CD4-positive, alpha-beta T cell (primary cell): ENCODE measurements at regions of chr1 and their contacts with region 1.

Region 1: DNA sequence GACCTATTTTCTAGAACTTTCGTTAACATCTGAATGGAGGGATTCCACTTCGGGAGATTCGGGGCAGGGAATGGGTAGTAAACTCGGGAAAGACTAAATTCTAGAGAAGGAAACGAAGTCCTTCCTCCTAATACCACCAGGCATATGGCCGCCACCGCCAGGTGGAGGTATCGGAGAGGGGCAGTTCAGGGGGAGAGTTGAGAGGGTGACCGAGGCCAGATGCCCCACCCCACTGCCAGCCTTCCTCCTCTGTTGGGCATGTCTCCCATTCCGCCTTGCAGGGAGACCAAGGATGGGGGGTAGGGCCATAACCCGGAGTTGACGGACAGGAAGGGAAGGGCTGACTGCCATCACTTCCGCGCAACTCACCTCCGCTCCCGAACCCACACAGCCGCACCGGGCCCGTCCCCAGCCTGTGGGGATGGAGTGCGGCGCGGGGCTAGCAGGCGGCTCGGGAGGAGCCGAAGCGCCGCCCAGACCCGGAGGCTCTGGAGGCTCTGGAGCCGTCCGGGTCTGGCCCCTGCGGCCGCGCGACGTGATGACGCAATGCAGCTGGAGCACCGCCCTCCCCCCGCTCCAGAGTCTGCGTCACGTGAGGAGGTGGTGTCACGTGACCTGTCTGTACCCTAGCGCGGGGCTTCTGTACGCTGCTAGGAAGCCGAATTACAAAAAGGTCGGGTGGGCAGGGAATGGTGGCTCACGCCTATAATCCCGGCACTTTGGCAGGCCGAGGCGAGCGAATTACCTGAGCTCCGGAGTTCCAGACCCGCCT is at the start of gene KLHL12:
- DNase-seq: peak; percentile 89 to 97 (median 92)
- ATAC-seq: peak; percentile 92
- H3K4me3 ChIP-seq: peak within 1 kb of the TSS; percentile 93
- H3K4me3 Mint-ChIP-seq: peak within 1 kb of the TSS; percentile 98
- H3K27ac ChIP-seq: peak within 1 kb of the TSS; percentile 88 to 89
- H3K27ac Mint-ChIP-seq: peak within 1 kb of the TSS; percentile 98
- H3K4me1 ChIP-seq: peaks cover 14% of the 10 kb centered on the region
- H3K4me1 Mint-ChIP-seq: peaks cover 41% of the 10 kb centered on the region
- H3K27me3 ChIP-seq: no peaks in the 10 kb centered on the region
- H3K27me3 Mint-ChIP-seq: no peaks in the 10 kb centered on the region
- CTCF ChIP-seq: peak; percentile 69
- total RNA-seq, gene KLHL12: 18.5 to 18.6 TPM

Region 2: GRCh38 chr1:202810615-202811295 is 116.2 kb before region 1 on chr1 and contains the start of gene PCAT6:
- CTCF ChIA-PET with region 1: no interaction called
- POLR2A ChIA-PET with region 1: interaction called, 4 read pairs
- intact Hi-C with region 1: loop called in 1 of 2 experiments (anchors 10 kb)
- DNase-seq: peak; percentile 67 to 93 (median 81)
- ATAC-seq: peak; percentile 67
- H3K4me3 ChIP-seq: peak within 1 kb of the TSS; percentile 96
- H3K4me3 Mint-ChIP-seq: peak within 1 kb of the TSS; percentile 90
- H3K27ac ChIP-seq: peak within 1 kb of the TSS in 1 of 2 donors; percentile 35
- H3K27ac Mint-ChIP-seq: peak within 1 kb of the TSS; percentile 80
- H3K4me1 ChIP-seq: peaks cover 33% of the 10 kb centered on the region
- H3K4me1 Mint-ChIP-seq: peaks cover 38% of the 10 kb centered on the region
- H3K27me3 ChIP-seq: no peaks in the 10 kb centered on the region
- H3K27me3 Mint-ChIP-seq: no peaks in the 10 kb centered on the region
- CTCF ChIP-seq: no peak
- total RNA-seq, gene PCAT6: 0.91 to 1.3 TPM

Region 3: GRCh38 chr1:202957733-202958543 is 31.0 kb after region 1 on chr1 and contains the start of gene ADIPOR1:
- CTCF ChIA-PET with region 1: no interaction called
- POLR2A ChIA-PET with region 1: interaction called, 5 read pairs
- intact Hi-C with region 1: loop called (anchors 1 to 2 kb)
- DNase-seq: peak; percentile 88 to 97 (median 95)
- ATAC-seq: peak; percentile 96
- H3K4me3 ChIP-seq: peak within 1 kb of the TSS; percentile 98
- H3K4me3 Mint-ChIP-seq: peak within 1 kb of the TSS; percentile 98
- H3K27ac ChIP-seq: peak within 1 kb of the TSS; percentile 81
- H3K27ac Mint-ChIP-seq: peak within 1 kb of the TSS; percentile 95
- H3K4me1 ChIP-seq: peaks cover 38% of the 10 kb centered on the region
- H3K4me1 Mint-ChIP-seq: peaks cover 55% of the 10 kb centered on the region
- H3K27me3 ChIP-seq: no peaks in the 10 kb centered on the region
- H3K27me3 Mint-ChIP-seq: no peaks in the 10 kb centered on the region
- CTCF ChIP-seq: peak; percentile 22
- total RNA-seq, gene ADIPOR1: 91.5 to 95.6 TPM

Region 4: DNA sequence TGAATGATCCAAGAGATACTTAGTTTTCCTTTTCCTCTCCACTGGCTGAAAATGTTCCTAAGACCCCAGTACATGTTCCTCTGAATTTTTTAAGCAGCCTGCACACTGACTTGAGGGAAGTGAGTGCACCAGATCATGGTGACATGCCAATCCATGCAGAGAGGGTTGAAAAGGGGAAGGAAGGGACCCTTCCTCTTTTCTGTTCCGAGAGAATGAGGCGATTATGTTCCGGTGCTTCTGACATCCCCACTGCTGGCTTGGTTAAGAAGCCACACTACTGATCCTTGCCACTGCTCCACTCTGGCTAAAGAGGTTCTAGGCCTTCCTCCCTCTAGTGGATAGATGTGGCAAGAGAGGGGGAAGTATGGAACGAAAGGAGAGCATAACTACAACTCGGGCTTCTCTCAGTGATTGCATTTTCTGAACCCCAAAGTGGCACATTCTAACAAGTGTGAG is 42.0 kb after region 1 on chr1:
- CTCF ChIA-PET with region 1: interaction called, 5 read pairs
- POLR2A ChIA-PET with region 1: interaction called, 9 read pairs
- intact Hi-C with region 1: loop called (anchors 2 kb)
- DNase-seq: peak in 8 of 14 experiments; percentile 5 to 78 (median 24)
- ATAC-seq: peak; percentile 45
- H3K4me3 ChIP-seq: no peak overlapping the region
- H3K4me3 Mint-ChIP-seq: peak overlapping the region; percentile 94
- H3K27ac ChIP-seq: no peak overlapping the region
- H3K27ac Mint-ChIP-seq: peak overlapping the region; percentile 90
- H3K4me1 ChIP-seq: peaks cover 36% of the 10 kb centered on the region
- H3K4me1 Mint-ChIP-seq: peaks cover 27% of the 10 kb centered on the region
- H3K27me3 ChIP-seq: no peaks in the 10 kb centered on the region
- H3K27me3 Mint-ChIP-seq: no peaks in the 10 kb centered on the region
- CTCF ChIP-seq: peak; percentile 47

Region 5: GRCh38 chr1:202998836-202999750 is 72.2 kb after region 1 on chr1:
- CTCF ChIA-PET with region 1: interaction called, 5 read pairs
- POLR2A ChIA-PET with region 1: interaction called, 3 read pairs
- intact Hi-C with region 1: loop called (anchors 1 kb)
- DNase-seq: peak; percentile 29 to 83 (median 58)
- ATAC-seq: peak; percentile 59
- H3K4me3 ChIP-seq: no peak overlapping the region
- H3K4me3 Mint-ChIP-seq: no peak overlapping the region
- H3K27ac ChIP-seq: no peak overlapping the region
- H3K27ac Mint-ChIP-seq: no peak overlapping the region
- H3K4me1 ChIP-seq: peaks cover 4% of the 10 kb centered on the region
- H3K4me1 Mint-ChIP-seq: peaks cover 7% of the 10 kb centered on the region
- H3K27me3 ChIP-seq: peaks cover 0 to 14% of the 10 kb centered on the region in 2 experiments
- H3K27me3 Mint-ChIP-seq: peaks cover 33% of the 10 kb centered on the region
- CTCF ChIP-seq: peak; percentile 91

Region 6: DNA sequence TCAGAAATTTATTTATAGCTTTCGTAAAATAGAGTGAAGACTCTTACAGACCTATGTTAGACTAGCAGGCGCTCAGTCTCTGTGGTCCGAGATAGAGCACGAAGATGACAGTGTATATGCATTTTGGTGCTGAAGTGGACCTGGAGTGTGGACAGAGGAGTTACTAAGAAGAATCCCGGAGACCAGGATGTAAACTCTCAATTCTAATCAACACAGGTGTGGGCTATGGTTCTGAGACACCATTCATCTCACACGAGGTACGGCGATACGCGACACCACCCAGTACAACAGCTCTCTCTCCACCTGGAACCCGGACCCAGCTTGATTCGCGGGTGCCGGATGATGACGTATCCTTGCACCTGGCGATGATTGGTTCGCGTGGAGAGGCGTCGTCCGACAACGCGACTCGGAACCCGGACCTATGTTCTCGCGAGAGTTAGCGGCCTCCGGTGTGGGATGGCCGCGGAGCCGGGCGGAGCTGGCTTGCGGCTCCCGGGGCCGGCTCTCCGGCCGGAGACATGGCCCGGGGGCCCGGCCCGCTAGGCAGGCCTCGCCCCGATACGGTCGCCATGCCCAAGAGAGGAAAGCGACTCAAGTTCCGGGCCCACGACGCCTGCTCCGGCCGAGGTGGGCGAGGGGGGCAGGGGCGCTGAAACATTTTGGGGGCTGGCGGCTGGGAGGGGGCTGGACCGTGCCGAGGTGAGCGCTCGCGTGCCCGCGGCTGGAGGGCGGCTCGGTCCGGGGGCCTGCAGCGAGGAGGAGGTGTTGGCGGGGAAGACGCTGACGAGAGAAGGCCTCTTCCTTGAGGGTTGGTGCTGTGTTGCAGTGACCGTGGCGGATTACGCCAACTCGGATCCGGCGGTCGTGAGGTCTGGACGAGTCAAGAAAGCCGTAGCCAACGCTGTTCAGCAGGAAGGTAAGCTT is 80.3 kb after region 1 on chr1 and contains the start of gene TMEM183A:
- CTCF ChIA-PET with region 1: no interaction called
- POLR2A ChIA-PET with region 1: interaction called, 15 read pairs
- intact Hi-C with region 1: no loop called
- DNase-seq: peak; percentile 88 to 98 (median 92)
- ATAC-seq: peak; percentile 94
- H3K4me3 ChIP-seq: peak within 1 kb of the TSS; percentile 71
- H3K4me3 Mint-ChIP-seq: peak within 1 kb of the TSS; percentile 99
- H3K27ac ChIP-seq: peak within 1 kb of the TSS; percentile 71 to 96
- H3K27ac Mint-ChIP-seq: peak within 1 kb of the TSS; percentile 95
- H3K4me1 ChIP-seq: peaks cover 19% of the 10 kb centered on the region
- H3K4me1 Mint-ChIP-seq: peaks cover 35% of the 10 kb centered on the region
- H3K27me3 ChIP-seq: no peaks in the 10 kb centered on the region
- H3K27me3 Mint-ChIP-seq: no peaks in the 10 kb centered on the region
- CTCF ChIP-seq: no peak
- total RNA-seq, gene TMEM183A: 187 to 194 TPM